Transverse colon (tissue), 4 donors: ENCODE measurements at regions of chr11 and their contacts with region 1.

Region 1: GRCh38 chr11:6481012-6481923 is at the starts of genes ARFIP2 and TIMM10B:
- DNase-seq: peak; percentile 99
- H3K4me3 ChIP-seq: peak within 1 kb of the TSS; percentile 64 to 88 (median 66)
- H3K27ac ChIP-seq: peak within 1 kb of the TSS; percentile 91 to 96 (median 94)
- H3K4me1 ChIP-seq: peaks cover 13 to 40% (median 29%) of the 10 kb centered on the region in 4 donors
- H3K27me3 ChIP-seq: no peaks in the 10 kb centered on the region
- CTCF ChIP-seq: no peak
- EP300 ChIP-seq: peak; percentile 49
- POLR2A ChIP-seq: peak; percentile 96
- total RNA-seq, gene ARFIP2: 77.3 to 110 (median 87.2) TPM
- total RNA-seq, gene TIMM10B: 19.1 to 40.2 (median 30.3) TPM

Region 2: GRCh38 chr11:6234387-6235107 is 246.7 kb before region 1 on chr11 and contains the start of gene FHIP1B:
- in situ Hi-C with region 1: loop called in 1 of 4 experiments (anchors 10 kb)
- intact Hi-C with region 1: no loop called
- DNase-seq: peak; percentile 100
- H3K4me3 ChIP-seq: peak within 1 kb of the TSS; percentile 60 to 94 (median 73)
- H3K27ac ChIP-seq: peak within 1 kb of the TSS; percentile 91 to 96 (median 92)
- H3K4me1 ChIP-seq: peaks cover 4 to 37% (median 26%) of the 10 kb centered on the region in 4 donors
- H3K27me3 ChIP-seq: no peaks in the 10 kb centered on the region
- CTCF ChIP-seq: no peak
- EP300 ChIP-seq: no peak
- POLR2A ChIP-seq: peak; percentile 82
- total RNA-seq, gene FHIP1B: 190 to 681 (median 228) TPM

Region 3: DNA sequence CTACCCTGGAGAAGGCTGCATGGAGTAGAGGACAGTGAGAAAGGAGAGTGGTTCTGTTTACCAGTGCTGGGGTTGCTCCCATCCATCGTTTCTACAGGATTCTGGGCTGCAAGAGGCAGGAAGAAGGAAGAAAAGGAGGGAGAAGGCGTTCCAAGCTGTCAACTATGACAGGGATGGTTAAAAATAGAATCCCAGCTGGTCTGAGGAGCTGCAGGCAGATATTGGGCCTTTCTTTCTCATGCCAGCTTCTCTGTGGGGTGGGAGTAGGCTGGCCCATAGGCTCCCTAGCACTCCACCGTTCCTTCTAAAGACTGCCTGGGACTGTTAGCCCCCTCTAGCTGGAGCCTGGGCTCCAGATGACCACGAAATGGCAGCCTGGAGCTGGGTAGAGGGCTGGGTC is 208.1 kb before region 1 on chr11:
- in situ Hi-C with region 1: no loop called
- intact Hi-C with region 1: no loop called
- DNase-seq: no peak
- H3K4me3 ChIP-seq: no peak overlapping the region
- H3K27ac ChIP-seq: no peak overlapping the region
- H3K4me1 ChIP-seq: no peaks in the 10 kb centered on the region
- H3K27me3 ChIP-seq: peaks cover 25% of the 10 kb centered on the region
- CTCF ChIP-seq: no peak
- EP300 ChIP-seq: no peak
- POLR2A ChIP-seq: no peak